Naive thymus-derived CD4-positive, alpha-beta T cell (primary cell): ENCODE measurements at regions of chr14 and their contacts with region 1.

Region 1: DNA sequence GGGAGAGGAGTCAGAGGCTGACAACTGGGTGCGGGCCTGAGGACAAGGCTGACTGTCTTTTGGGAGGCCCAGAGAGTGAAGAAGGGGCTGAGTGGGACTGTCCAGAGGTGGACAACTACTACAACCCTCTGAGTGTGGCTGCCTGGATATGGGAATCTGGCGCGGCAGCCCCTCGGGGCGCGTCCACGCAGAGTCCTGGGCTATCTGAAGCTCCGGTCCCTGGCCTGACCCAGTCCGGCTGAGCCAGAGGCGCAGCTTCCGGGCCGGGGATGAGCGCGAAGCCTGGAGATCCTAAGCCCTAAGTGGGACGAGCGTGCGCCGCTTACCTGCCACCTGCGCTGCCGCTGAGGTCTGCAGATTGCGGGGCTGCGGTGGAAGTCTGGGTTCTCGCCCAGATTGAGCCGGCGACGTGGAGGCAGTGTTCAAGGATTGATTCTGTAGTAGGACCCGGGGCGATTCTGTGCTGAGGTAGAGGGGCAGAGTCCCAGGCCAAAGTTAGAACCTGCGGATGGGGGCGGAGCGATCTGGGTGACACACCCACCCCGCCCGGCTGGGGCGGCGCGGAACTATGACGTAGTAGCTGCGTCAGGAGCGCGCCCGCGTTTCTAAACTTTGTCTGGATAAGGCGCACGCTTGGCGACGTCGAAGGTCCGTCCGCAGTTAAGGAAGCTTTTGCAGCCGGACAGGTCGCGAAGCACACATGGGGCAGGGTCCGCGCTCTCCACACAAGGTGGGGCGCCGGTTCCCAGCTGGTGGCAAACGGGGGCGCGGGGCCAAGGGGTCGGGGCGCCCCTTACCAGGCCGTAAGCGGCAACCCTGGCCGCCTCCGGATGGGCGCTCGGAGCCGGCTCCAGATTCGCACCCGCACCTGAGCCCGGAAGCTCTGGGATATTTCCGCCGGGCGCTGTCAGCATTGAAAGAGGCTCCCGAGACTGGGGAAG is at the starts of genes DHRS1 and NOP9:
- DNase-seq: peak; percentile 86 to 95 (median 92)
- ATAC-seq: peak; percentile 93
- H3K4me3 ChIP-seq: peak within 1 kb of the TSS; percentile 83
- H3K4me3 Mint-ChIP-seq: peak within 1 kb of the TSS; percentile 89 to 97 (median 94)
- H3K27ac ChIP-seq: peak within 1 kb of the TSS; percentile 97
- H3K27ac Mint-ChIP-seq: peak within 1 kb of the TSS; percentile 91 to 98 (median 96)
- H3K4me1 ChIP-seq: peaks cover 19 to 43% of the 10 kb centered on the region in 2 donors
- H3K4me1 Mint-ChIP-seq: peaks cover 28 to 67% (median 55%) of the 10 kb centered on the region in 7 donors
- H3K27me3 ChIP-seq: no peaks in the 10 kb centered on the region
- H3K27me3 Mint-ChIP-seq: no peaks in the 10 kb centered on the region
- total RNA-seq, gene DHRS1: 25.2 to 37.0 (median 33.3) TPM
- total RNA-seq, gene NOP9: 22.7 to 39.5 (median 29.8) TPM

Region 2: DNA sequence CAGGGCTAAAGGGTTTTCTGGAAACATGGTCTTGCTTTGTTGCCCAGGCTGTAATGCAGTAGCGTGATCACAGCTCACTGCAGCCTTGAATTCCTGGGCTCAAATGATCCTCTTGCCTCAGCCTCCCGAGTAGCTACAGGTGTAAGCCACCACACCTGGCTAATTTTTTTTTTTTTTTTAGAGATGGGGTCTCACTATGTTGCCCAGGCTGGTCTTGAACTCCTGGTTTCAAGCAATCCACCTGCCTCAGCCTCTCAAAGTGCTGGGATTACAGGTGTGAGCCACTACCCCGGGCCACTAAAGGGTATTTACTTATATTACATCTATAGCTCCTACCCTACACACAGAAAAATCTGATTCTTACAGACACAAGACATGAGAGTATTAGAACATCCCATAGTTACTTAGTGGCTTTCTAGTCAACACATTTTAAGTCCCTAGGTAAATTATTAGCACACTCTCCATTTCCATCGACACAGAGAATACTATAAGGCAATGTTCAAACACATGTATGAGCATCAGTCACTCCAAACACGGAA is 191.1 kb before region 1 on chr14:
- CTCF ChIA-PET with region 1: interaction called, 4 read pairs
- POLR2A ChIA-PET with region 1: interaction called, 3 read pairs
- intact Hi-C with region 1: loop called in 1 of 2 experiments (anchors 2 kb)
- DNase-seq: no peak
- ATAC-seq: peak; percentile 21
- H3K4me3 ChIP-seq: no peak overlapping the region
- H3K4me3 Mint-ChIP-seq: peak overlapping the region; percentile 3 to 68 (median 46)
- H3K27ac ChIP-seq: peak overlapping the region; percentile 66
- H3K27ac Mint-ChIP-seq: peak overlapping the region; percentile 90 to 97 (median 94)
- H3K4me1 ChIP-seq: peaks cover 11 to 12% of the 10 kb centered on the region in 2 donors
- H3K4me1 Mint-ChIP-seq: peaks cover 9 to 28% (median 13%) of the 10 kb centered on the region in 7 donors
- H3K27me3 ChIP-seq: no peaks in the 10 kb centered on the region
- H3K27me3 Mint-ChIP-seq: no peaks in the 10 kb centered on the region

Region 3: GRCh38 chr14:24188251-24189058 is 111.1 kb before region 1 on chr14 and contains the start of gene IPO4:
- CTCF ChIA-PET with region 1: no interaction called
- POLR2A ChIA-PET with region 1: interaction called, 3 read pairs
- intact Hi-C with region 1: loop called in 1 of 2 experiments (anchors 2 kb)
- DNase-seq: peak; percentile 75 to 97 (median 94)
- ATAC-seq: peak; percentile 97
- H3K4me3 ChIP-seq: peak within 1 kb of the TSS; percentile 89
- H3K4me3 Mint-ChIP-seq: peak within 1 kb of the TSS; percentile 89 to 96 (median 90)
- H3K27ac ChIP-seq: peak within 1 kb of the TSS; percentile 83
- H3K27ac Mint-ChIP-seq: peak within 1 kb of the TSS; percentile 82 to 96 (median 92)
- H3K4me1 ChIP-seq: peaks cover 15 to 16% of the 10 kb centered on the region in 2 donors
- H3K4me1 Mint-ChIP-seq: peaks cover 24 to 53% (median 47%) of the 10 kb centered on the region in 7 donors
- H3K27me3 ChIP-seq: no peaks in the 10 kb centered on the region
- H3K27me3 Mint-ChIP-seq: no peaks in the 10 kb centered on the region
- total RNA-seq, gene IPO4: 21.5 to 45.2 (median 42.2) TPM

Region 4: DNA sequence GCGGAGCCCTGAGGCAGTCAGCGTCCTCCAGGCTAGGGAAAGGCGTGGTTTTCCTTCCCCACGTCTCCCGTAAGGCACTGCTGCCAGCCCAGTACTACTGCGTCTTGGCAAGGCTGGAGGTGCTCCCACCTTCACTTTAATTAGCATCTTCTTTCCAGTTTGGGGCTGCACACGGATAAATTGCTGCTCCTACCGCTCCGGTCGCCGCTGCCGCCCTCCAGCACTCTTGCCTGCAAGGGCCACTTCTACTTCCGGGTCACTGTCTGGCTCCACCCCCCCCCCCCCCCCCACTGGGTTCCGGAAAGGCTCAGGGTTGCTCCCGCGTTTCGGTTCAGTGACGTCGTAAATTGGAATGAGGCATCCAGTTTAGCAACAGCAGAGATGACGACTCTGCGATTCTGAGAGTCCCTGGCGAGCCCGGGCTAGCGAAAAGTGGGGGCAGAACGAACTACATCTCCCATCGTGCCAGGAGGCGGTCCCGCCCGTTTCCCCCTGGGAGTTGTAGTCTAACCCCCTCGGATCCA is 67.3 kb before region 1 on chr14 and contains the start of gene NEDD8:
- CTCF ChIA-PET with region 1: interaction called, 5 read pairs
- POLR2A ChIA-PET with region 1: interaction called, 8 read pairs
- intact Hi-C with region 1: loop called in 1 of 2 experiments (anchors 1 kb)
- DNase-seq: peak; percentile 72 to 91 (median 88)
- ATAC-seq: peak; percentile 91
- H3K4me3 ChIP-seq: peak within 1 kb of the TSS; percentile 99
- H3K4me3 Mint-ChIP-seq: peak within 1 kb of the TSS; percentile 86 to 100 (median 96)
- H3K27ac ChIP-seq: peak within 1 kb of the TSS; percentile 89
- H3K27ac Mint-ChIP-seq: peak within 1 kb of the TSS; percentile 89 to 98 (median 93)
- H3K4me1 ChIP-seq: peaks cover 11 to 27% of the 10 kb centered on the region in 2 donors
- H3K4me1 Mint-ChIP-seq: peaks cover 36 to 79% (median 63%) of the 10 kb centered on the region in 7 donors
- H3K27me3 ChIP-seq: no peaks in the 10 kb centered on the region
- H3K27me3 Mint-ChIP-seq: no peaks in the 10 kb centered on the region
- total RNA-seq, gene NEDD8: 73.5 to 175 (median 106) TPM

Region 5: DNA sequence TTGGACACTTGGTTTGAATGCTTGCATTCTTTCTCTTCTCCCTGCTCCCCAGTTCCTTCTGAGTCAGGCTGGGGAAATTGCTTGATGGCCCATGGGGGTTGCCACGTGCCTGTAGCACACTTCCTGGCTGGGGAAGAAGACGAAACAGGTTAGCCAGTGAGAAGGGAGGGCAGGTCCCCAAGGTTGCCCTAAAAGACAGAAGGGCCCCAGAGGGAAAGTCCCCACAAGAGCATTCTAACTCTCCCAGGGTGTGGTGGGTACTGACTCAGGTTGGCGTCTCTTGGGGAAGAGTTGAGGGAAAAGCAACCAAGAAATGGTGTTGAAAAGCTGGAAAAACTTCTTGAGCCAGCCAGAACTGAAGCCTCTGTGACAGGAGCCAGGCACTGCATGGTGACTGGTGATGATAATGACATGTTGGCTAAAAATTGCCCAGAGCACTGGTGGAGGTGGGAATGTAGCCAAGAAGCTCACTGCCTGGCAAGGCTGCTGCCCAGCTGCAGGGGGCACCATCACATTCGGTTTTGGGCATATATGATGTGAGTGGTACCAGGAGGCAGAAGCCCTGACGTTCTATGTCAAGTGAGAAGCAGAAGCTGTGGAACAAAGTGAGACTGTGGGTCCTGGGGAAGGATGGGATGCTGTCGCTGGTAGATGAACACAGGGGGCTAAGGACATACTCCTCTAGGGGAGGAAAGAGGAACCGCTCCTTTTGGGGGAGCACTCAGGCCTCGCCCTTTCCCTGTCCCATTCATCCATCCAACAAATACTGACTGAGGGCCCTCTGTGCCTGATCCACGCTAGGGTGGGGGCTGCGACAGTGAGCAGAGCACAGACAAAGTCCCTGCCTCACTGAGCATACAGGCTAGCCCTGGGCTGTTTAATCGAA is 20.0 kb before region 1 on chr14:
- CTCF ChIA-PET with region 1: interaction called, 17 read pairs
- POLR2A ChIA-PET with region 1: interaction called, 4 read pairs
- intact Hi-C with region 1: loop called in 1 of 2 experiments (anchors 1 kb)
- DNase-seq: peak; percentile 17 to 69 (median 41)
- ATAC-seq: peak; percentile 85
- H3K4me3 ChIP-seq: no peak overlapping the region
- H3K4me3 Mint-ChIP-seq: peak overlapping the region in 9 of 10 donors; percentile 12 to 54 (median 34)
- H3K27ac ChIP-seq: peak overlapping the region; percentile 56
- H3K27ac Mint-ChIP-seq: peak overlapping the region; percentile 65 to 91 (median 76)
- H3K4me1 ChIP-seq: peaks cover 6 to 15% of the 10 kb centered on the region in 2 donors
- H3K4me1 Mint-ChIP-seq: peaks cover 29 to 41% (median 36%) of the 10 kb centered on the region in 7 donors
- H3K27me3 ChIP-seq: no peaks in the 10 kb centered on the region
- H3K27me3 Mint-ChIP-seq: no peaks in the 10 kb centered on the region

Region 6: GRCh38 chr14:24431569-24432258 is 132.2 kb after region 1 on chr14:
- CTCF ChIA-PET with region 1: interaction called, 7 read pairs
- POLR2A ChIA-PET with region 1: interaction called, 12 read pairs
- intact Hi-C with region 1: loop called in 1 of 2 experiments (anchors 1 kb)
- DNase-seq: peak; percentile 76 to 91 (median 86)
- ATAC-seq: peak; percentile 77
- H3K4me3 ChIP-seq: peak overlapping the region; percentile 96
- H3K4me3 Mint-ChIP-seq: peak overlapping the region; percentile 82 to 96 (median 91)
- H3K27ac ChIP-seq: peak overlapping the region; percentile 99
- H3K27ac Mint-ChIP-seq: peak overlapping the region; percentile 51 to 97 (median 96)
- H3K4me1 ChIP-seq: peaks cover 24 to 41% of the 10 kb centered on the region in 2 donors
- H3K4me1 Mint-ChIP-seq: peaks cover 19 to 59% (median 53%) of the 10 kb centered on the region in 7 donors
- H3K27me3 ChIP-seq: no peaks in the 10 kb centered on the region
- H3K27me3 Mint-ChIP-seq: no peaks in the 10 kb centered on the region